ENCODE measurements at regions of chr11 and their contacts with region 1.

Region 1: GRCh38 chr11:65027213-65028067 is at the start of gene SNX15:
- DNase-seq: peak; percentile 96
- ATAC-seq: peak; percentile 92
- H3K4me3 Mint-ChIP-seq: peak within 1 kb of the TSS; percentile 75
- H3K27ac Mint-ChIP-seq: peak within 1 kb of the TSS; percentile 91
- H3K4me1 Mint-ChIP-seq: peaks cover 22% of the 10 kb centered on the region
- H3K27me3 Mint-ChIP-seq: peaks cover 2% of the 10 kb centered on the region
- total RNA-seq, gene SNX15: 21.2 to 25.7 TPM

Region 2: GRCh38 chr11:64688534-64688982 is 338.9 kb before region 1 on chr11:
- CTCF ChIA-PET with region 1: no interaction called
- POLR2A ChIA-PET with region 1: no interaction called
- DNase-seq: peak; percentile 94
- ATAC-seq: peak; percentile 99
- H3K4me3 Mint-ChIP-seq: peak overlapping the region; percentile 38
- H3K27ac Mint-ChIP-seq: no peak overlapping the region
- H3K4me1 Mint-ChIP-seq: peaks cover 19% of the 10 kb centered on the region
- H3K27me3 Mint-ChIP-seq: peaks cover 29% of the 10 kb centered on the region

Region 3: GRCh38 chr11:64996710-64997380 is 30.6 kb before region 1 on chr11 and contains the start of gene BATF2:
- CTCF ChIA-PET with region 1: no interaction called
- POLR2A ChIA-PET with region 1: no interaction called
- DNase-seq: peak; percentile 41
- ATAC-seq: peak; percentile 67
- H3K4me3 Mint-ChIP-seq: peak within 1 kb of the TSS; percentile 46
- H3K27ac Mint-ChIP-seq: peak within 1 kb of the TSS; percentile 79
- H3K4me1 Mint-ChIP-seq: peaks cover 33% of the 10 kb centered on the region
- H3K27me3 Mint-ChIP-seq: peaks cover 2% of the 10 kb centered on the region
- total RNA-seq, gene BATF2: 0.50 to 0.99 TPM

Region 4: GRCh38 chr11:65040847-65041621 is 13.6 kb after region 1 on chr11 and contains the start of gene SAC3D1:
- CTCF ChIA-PET with region 1: interaction called, 4 read pairs
- POLR2A ChIA-PET with region 1: interaction called, 15 read pairs
- DNase-seq: peak; percentile 97
- ATAC-seq: peak; percentile 95
- H3K4me3 Mint-ChIP-seq: peak within 1 kb of the TSS; percentile 88
- H3K27ac Mint-ChIP-seq: peak within 1 kb of the TSS; percentile 95
- H3K4me1 Mint-ChIP-seq: peaks cover 35% of the 10 kb centered on the region
- H3K27me3 Mint-ChIP-seq: no peaks in the 10 kb centered on the region
- total RNA-seq, gene SAC3D1: 36.3 to 36.6 TPM